Heart left ventricle (tissue), 16 donors: ENCODE measurements at regions of chr13 and their contacts with region 1.

Region 1: GRCh38 chr13:31199849-31200636 is at the start of gene B3GLCT:
- DNase-seq: peak; percentile 79 to 92 (median 81)
- ATAC-seq: peak; percentile 64 to 91 (median 85)
- H3K4me3 ChIP-seq: peak within 1 kb of the TSS; percentile 52 to 99 (median 82)
- H3K27ac ChIP-seq: peak within 1 kb of the TSS; percentile 93 to 100 (median 98)
- H3K4me1 ChIP-seq: peaks cover 0 to 46% (median 19%) of the 10 kb centered on the region in 12 donors
- H3K27me3 ChIP-seq: no peaks in the 10 kb centered on the region
- CTCF ChIP-seq: peak; percentile 60 to 95 (median 84)
- POLR2A ChIP-seq: no peak
- total RNA-seq, gene B3GLCT: 9.5 to 27.2 (median 20.9) TPM

Region 2: DNA sequence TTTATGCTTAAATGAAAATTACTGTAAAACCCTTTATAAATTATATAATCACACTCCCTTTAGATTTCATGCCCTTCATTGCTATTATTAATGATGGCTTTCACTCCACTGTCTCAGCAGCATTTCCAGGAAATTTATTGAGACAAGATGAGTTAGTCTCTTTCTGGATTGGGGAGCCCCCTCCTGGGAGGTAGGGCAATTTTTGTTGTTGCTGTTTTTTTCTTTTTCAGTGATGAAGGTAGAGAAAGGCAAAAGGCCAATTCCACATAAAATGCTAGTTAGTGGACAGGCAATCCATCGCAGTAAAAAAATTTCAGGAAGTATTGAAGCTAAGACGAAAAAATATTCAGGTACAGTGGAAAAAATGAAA is 187.4 kb before region 1 on chr13:
- intact Hi-C with region 1: no loop called
- DNase-seq: no peak
- ATAC-seq: no peak
- H3K4me3 ChIP-seq: no peak overlapping the region
- H3K27ac ChIP-seq: no peak overlapping the region
- H3K4me1 ChIP-seq: no peaks in the 10 kb centered on the region
- H3K27me3 ChIP-seq: peaks cover 0 to 34% (median 0%) of the 10 kb centered on the region in 9 donors
- CTCF ChIP-seq: peak in 3 of 12 donors; percentile 7 to 18 (median 13)
- POLR2A ChIP-seq: no peak

Region 3: DNA sequence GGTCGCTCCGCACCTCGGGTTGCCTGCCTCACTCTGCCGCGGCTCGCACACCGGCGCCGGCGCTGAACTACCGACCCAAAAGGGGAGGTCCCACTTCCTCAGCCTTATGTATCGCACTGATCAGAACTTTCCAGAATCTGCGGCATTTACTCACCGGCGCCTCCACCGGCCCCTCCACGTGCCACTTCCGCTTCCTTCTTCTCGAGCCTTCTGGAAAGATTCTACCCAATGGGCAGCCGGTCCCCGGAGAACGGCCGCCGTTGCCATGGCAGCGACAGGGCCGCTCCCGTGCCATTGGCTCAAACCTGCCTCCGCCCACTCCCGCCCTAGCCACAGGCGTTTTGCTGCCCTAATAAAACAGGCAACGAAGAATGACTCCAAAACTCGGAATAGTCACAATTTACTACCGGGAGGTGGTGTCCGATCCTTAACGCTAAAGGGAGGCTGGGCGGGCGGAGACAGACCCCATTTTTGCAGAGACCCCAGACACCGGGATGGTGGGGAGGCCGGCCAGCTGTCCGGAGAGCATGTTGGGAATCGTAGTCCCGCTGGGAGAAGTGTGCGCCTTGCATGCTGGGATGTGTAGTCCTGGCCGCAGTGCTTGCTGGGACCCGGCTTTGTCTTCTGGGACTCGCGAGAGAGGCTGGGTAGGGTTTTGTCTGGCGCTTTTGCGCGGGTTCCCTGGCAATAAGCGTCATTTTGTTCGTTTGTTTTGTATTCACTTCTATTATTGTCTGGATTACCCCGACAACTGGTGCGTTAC is 38.0 kb before region 1 on chr13 and contains the start of gene HSPH1:
- intact Hi-C with region 1: loop called in 4 of 10 experiments (anchors 2 to 5 kb)
- DNase-seq: peak; percentile 99 to 100 (median 99)
- ATAC-seq: peak; percentile 97 to 98 (median 98)
- H3K4me3 ChIP-seq: peak within 1 kb of the TSS; percentile 62 to 93 (median 87)
- H3K27ac ChIP-seq: peak within 1 kb of the TSS; percentile 33 to 97 (median 92)
- H3K4me1 ChIP-seq: peaks cover 0 to 30% (median 18%) of the 10 kb centered on the region in 12 donors
- H3K27me3 ChIP-seq: no peaks in the 10 kb centered on the region
- CTCF ChIP-seq: peak in 6 of 12 donors; percentile 6 to 43 (median 28)
- POLR2A ChIP-seq: peak in 1 of 2 donors; percentile 76
- total RNA-seq, gene HSPH1: 24.6 to 88.1 (median 44.5) TPM